ENCODE measurements at regions of chr4 and their contacts with region 1.

Region 1: DNA sequence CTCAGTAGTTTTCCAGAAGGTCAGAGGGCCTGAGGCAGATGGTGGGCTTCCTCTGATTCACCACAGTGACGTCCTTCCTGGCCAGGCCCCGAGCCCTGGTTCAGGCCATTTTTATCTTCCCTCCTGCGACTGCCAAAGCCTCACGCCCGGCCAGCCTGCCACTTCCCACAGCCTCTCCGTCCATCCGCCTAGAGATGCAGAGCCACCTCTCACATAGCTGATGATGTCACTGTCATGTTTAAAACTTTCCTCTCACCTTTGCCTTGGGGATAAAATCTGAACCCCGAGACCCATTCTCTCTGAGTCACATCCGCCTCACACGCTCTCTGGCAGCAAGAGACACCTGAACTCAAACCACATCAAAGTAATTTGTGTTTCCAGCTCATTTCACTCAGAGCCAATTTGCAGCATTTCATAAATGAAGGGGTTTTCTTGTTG is 175.3 kb downstream of the QDPR start:
- DNase-seq: no peak
- H3K4me3 ChIP-seq: no peak overlapping the region
- H3K27ac ChIP-seq: no peak overlapping the region
- H3K4me1 ChIP-seq: no peaks in the 10 kb centered on the region
- H3K27me3 ChIP-seq: no peaks in the 10 kb centered on the region

Region 2: GRCh38 chr4:15729910-15730533 is 1606.5 kb before region 1 on chr4:
- in situ Hi-C with region 1: no loop called
- DNase-seq: peak; percentile 62
- H3K4me3 ChIP-seq: no peak overlapping the region
- H3K27ac ChIP-seq: no peak overlapping the region
- H3K4me1 ChIP-seq: no peaks in the 10 kb centered on the region
- H3K27me3 ChIP-seq: no peaks in the 10 kb centered on the region

Region 3: GRCh38 chr4:16794816-16795445 is 541.6 kb before region 1 on chr4:
- in situ Hi-C with region 1: loop called (anchors 10 kb)
- DNase-seq: peak; percentile 70
- H3K4me3 ChIP-seq: no peak overlapping the region
- H3K27ac ChIP-seq: no peak overlapping the region
- H3K4me1 ChIP-seq: no peaks in the 10 kb centered on the region
- H3K27me3 ChIP-seq: no peaks in the 10 kb centered on the region

Region 4: GRCh38 chr4:16967722-16968121 is 368.8 kb before region 1 on chr4:
- in situ Hi-C with region 1: no loop called
- DNase-seq: peak; percentile 60
- H3K4me3 ChIP-seq: no peak overlapping the region
- H3K27ac ChIP-seq: no peak overlapping the region
- H3K4me1 ChIP-seq: peaks cover 8% of the 10 kb centered on the region
- H3K27me3 ChIP-seq: no peaks in the 10 kb centered on the region

Region 5: DNA sequence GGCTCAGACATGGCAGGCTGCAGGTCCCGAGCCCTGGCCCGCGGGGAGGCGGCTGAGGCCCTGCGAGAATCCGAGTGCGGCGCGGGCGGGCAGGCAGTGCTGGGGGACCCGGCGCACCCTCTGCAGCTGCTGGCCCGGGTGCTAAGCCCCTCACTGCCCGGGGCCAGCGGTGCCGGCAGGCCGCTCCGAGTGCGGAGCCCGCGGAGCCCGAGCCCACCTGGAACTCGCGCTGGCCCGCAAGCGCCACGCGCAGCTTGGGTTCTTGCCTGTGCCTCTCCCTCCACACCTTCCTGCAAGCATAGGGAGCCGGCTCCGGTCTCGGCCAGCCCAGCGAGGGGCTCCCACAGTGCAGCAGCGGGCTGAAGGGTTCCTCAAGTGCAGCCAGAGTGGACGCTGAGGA is 77.8 kb after region 1 on chr4:
- in situ Hi-C with region 1: no loop called
- DNase-seq: no peak
- H3K4me3 ChIP-seq: no peak overlapping the region
- H3K27ac ChIP-seq: no peak overlapping the region
- H3K4me1 ChIP-seq: no peaks in the 10 kb centered on the region
- H3K27me3 ChIP-seq: peaks cover 22% of the 10 kb centered on the region; the same call in 1 of the 2 replicates